Posterior cingulate gyrus (tissue), 11 donors: ENCODE measurements at regions of chr1 and their contacts with region 1.

Region 1: GRCh38 chr1:24415334-24415909 is at the start of gene NIPAL3:
- DNase-seq: peak; percentile 94 to 99 (median 97)

Region 2: DNA sequence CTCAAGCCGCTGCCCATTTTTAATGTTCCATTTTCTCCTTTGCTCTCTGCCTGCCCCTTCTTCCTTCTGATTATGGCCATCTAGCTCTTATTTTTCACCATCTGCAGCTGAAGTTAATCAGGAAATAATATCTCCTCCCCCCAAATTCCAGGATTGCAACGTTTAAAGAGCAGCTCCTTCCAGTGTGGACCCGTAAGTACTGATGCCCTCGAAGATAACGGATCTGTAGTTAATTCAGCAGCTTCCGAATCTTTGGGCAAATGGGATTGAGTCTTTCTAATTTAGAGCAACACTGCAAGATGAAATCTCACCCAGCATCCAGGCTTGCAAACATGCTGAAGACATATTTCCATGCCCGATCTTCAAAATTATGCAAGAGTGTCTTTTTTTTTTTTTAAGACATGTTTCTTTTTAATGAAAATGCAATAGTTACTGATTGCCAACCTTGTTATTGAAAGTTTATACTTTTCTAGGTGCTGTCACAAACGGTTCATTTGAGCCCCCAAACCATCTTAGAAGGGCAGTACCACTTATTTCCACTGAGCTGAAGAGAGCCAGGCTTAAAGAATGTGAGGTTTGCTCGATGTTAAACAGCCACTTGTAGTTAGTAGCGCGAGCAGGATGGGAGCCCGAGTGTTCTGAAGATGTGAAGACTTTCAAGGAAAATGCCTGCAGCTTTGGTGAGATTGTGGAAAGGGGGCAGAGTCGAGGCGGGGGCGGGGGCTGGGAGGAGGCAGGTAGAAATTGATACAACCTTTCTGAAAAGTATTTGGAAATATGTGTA is 76.3 kb after region 1 on chr1:
- intact Hi-C with region 1: no loop called
- DNase-seq: no peak

Region 3: DNA sequence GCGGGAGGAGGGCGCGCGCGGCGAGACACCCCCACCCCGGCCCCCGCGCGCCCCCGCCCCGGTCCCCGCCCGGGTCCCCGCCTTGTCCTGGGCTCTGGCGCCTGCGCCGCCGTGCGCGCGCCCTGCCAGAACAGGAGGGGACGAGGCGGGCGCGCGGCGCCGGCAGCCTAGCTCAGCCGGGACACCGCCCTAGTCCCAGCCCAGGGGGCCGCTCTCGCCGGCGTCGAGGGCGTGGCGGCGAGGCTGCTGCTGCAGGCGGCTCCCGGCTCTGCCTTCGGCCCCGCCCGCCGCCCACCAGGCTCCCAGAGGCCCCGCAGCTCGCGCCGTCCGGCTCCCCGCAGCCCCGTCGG is 87.3 kb after region 1 on chr1 and contains the start of gene RCAN3:
- intact Hi-C with region 1: loop called (anchors 10 kb)
- DNase-seq: peak; percentile 51 to 95 (median 63)

Region 4: GRCh38 chr1:24642481-24643361 is 227.3 kb after region 1 on chr1 and contains the start of gene SRRM1:
- intact Hi-C with region 1: loop called (anchors 5 kb)
- DNase-seq: peak; percentile 98 to 100 (median 100)

Region 5: DNA sequence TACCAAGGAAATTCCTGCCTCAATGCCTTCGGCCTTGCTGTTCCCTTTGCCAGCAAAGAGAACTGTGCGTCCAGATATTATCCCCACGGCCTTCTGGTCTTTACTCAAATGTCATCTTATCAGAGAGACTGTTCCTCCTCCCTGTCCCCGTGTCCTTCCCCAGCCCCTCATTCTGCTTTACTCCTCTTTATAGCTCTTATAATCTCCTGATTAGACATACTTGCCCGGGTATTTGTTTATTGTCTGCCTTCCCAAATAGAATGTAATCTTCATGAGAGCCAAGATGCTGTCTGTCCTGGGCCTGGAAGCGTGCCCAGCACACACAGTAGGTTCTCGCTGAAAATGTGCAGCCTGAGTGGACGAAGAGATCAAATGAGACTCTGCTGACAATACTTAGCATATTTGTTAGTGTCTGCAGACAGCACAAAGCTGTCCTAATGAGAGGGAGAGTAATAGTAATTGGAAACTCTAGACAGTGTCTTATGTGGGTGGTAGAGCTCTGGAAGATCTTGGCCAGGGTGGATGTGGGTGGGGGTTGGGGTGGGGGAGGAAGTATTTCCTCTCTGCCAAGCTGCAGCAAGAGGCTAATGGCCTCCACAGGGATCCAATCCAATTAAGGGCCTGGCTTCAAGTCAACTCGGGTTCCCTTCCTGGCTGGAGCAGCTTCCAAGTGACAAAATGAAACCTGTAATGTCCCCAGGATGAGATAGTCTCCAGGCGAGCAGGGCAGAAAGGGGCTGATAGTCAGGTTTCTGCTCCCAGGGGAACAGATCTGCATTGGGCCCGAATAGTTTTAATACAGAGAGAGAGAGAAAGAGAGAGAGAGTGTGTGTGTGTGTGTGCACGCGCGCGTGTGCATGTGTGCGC is 320.3 kb after region 1 on chr1:
- intact Hi-C with region 1: no loop called
- DNase-seq: peak in 2 of 10 donors; percentile 21 to 40